Dorsolateral prefrontal cortex (tissue), 120 donors: ENCODE measurements at regions of chr22 and their contacts with region 1.

Region 1: DNA sequence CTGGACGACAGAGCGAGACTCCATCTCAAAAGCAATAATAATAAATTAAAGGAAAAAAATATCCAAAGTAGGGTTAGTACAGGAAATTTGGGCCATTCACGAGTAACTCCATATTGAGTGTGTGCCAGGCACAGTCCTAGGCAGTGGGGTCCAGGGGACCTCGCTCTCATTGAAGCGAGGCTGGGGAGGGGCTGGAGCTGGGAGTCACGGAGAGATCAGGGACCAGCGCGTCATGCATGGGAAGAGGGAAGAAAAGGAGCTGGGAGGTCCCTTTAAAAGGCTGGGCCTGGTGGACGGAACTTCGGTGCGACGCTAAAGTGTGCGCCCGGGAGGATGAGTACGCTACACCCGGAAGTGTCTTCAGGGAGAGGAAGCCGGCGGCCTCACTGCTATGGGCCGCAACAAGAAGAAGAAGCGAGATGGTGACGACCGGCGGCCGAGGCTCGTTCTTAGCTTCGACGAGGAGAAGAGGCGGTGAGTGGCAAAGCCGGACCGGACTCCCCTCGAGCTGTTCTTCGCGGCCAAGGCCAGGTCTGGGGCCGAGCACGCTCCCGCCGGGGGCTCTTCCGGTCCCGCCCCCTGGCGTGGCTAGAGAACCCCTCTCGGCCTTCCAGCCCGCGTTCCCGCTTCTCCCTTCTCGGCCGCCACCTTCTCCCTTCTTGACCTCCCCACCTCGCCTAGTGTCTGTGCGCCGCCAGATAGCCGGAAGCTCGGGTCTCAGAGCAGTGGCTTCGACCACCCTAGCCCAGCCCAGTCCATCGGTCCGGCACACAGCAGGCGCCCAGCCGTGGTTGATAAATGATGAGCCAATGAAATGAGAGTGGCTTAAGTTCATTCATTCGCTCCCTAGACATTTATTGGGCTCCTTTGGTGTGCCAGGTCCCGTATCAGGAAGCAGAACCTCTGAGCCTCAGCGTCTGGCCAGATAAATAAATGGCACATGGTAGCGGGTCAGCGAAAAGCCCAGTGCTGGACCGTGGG is at the start of gene NOL12:
- DNase-seq: peak; percentile 73 to 88 (median 83)
- H3K4me3 ChIP-seq: peak within 1 kb of the TSS; percentile 57 to 99 (median 88)
- H3K27ac ChIP-seq: peak within 1 kb of the TSS; percentile 36 to 98 (median 90)
- H3K27me3 ChIP-seq: no peaks in the 10 kb centered on the region
- CTCF ChIP-seq: peak in 42 of 56 donors; percentile 4 to 66 (median 40)
- total RNA-seq, gene NOL12: 14.9 to 41.9 (median 27.5) TPM

Region 2: DNA sequence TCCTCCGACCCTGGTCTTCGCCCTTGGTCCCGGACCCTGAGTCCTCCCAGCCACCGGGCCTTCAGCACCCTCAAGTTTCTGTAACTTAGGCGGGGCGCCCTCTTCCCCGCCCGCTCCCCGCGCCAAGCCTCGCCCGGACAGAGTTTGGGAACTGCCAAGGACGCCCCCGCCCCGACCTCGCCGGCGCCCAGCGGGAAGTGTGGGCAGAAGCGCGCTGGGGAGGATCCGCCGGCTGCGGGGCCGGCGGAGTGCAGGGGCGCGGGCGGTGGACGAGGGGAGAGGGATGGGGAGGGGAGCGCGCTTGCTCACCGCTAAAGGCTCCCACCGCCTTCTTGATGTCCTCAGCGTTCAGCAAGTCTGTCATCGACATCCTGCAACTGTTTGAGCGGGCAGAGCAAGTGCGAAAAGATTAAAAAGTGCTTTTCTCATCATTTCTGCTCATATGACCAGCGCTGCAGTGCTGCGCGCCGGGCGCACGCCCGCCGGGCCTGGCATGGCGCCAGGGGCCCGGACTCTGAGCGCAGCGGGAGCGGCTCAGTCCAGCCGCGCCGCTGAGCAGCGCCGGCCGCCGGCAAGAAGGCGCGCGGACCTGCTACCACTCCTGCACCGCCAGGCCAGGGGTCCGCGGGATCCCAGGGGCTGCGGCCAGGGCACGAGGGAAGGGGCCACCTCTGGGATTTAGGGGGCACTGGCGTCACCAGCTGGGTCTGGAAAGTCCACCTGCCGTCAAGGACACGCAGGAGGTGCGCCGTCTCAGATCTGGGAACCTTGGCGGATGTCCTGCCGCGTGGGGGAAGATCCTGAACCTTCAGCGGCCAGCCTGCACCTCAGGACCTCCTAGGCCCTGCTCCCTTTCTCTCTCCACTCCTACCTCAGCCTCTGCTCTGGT is 869.4 kb before region 1 on chr22 and contains the start of gene PVALB:
- intact Hi-C with region 1: no loop called
- DNase-seq: peak in 3 of 10 donors; percentile 51 to 65 (median 59)
- H3K4me3 ChIP-seq: peak within 1 kb of the TSS in 58 of 59 donors; percentile 12 to 62 (median 42)
- H3K27ac ChIP-seq: peak within 1 kb of the TSS in 2 of 59 donors; percentile 43 to 48
- H3K27me3 ChIP-seq: peaks cover 0 to 52% (median 38%) of the 10 kb centered on the region in 45 donors
- CTCF ChIP-seq: no peak
- total RNA-seq, gene PVALB: 4.4 to 160 (median 40.4) TPM

Region 3: GRCh38 chr22:37608477-37609239 is 77.6 kb before region 1 on chr22 and contains the start of gene GGA1:
- intact Hi-C with region 1: loop called in 1 of 2 experiments (anchors 2 kb)
- DNase-seq: peak; percentile 92 to 97 (median 96)
- H3K4me3 ChIP-seq: peak within 1 kb of the TSS; percentile 70 to 99 (median 93)
- H3K27ac ChIP-seq: peak within 1 kb of the TSS; percentile 85 to 99 (median 96)
- H3K27me3 ChIP-seq: no peaks in the 10 kb centered on the region
- CTCF ChIP-seq: peak in 35 of 56 donors; percentile 2 to 59 (median 30)
- total RNA-seq, gene GGA1: 45.6 to 94.6 (median 65.5) TPM

Region 4: GRCh38 chr22:37643225-37643847 is 43.0 kb before region 1 on chr22:
- intact Hi-C with region 1: loop called (anchors 2 kb)
- DNase-seq: peak; percentile 80 to 91 (median 88)
- H3K4me3 ChIP-seq: no peak overlapping the region
- H3K27ac ChIP-seq: peak overlapping the region in 6 of 59 donors; percentile 9 to 44 (median 24)
- H3K27me3 ChIP-seq: peaks cover 0 to 23% (median 0%) of the 10 kb centered on the region in 45 donors
- CTCF ChIP-seq: peak; percentile 82 to 97 (median 94)

Region 5: GRCh38 chr22:37745548-37746365 is 59.5 kb after region 1 on chr22:
- intact Hi-C with region 1: loop called in 1 of 2 experiments (anchors 5 kb)
- DNase-seq: peak; percentile 78 to 89 (median 87)
- H3K4me3 ChIP-seq: peak overlapping the region; percentile 58 to 91 (median 80)
- H3K27ac ChIP-seq: peak overlapping the region in 40 of 59 donors; percentile 8 to 90 (median 68)
- H3K27me3 ChIP-seq: peaks cover 0 to 5% (median 0%) of the 10 kb centered on the region in 45 donors
- CTCF ChIP-seq: no peak